HEK293 (cell line): ENCODE measurements at regions of chr11 and their contacts with region 1.

Region 1: DNA sequence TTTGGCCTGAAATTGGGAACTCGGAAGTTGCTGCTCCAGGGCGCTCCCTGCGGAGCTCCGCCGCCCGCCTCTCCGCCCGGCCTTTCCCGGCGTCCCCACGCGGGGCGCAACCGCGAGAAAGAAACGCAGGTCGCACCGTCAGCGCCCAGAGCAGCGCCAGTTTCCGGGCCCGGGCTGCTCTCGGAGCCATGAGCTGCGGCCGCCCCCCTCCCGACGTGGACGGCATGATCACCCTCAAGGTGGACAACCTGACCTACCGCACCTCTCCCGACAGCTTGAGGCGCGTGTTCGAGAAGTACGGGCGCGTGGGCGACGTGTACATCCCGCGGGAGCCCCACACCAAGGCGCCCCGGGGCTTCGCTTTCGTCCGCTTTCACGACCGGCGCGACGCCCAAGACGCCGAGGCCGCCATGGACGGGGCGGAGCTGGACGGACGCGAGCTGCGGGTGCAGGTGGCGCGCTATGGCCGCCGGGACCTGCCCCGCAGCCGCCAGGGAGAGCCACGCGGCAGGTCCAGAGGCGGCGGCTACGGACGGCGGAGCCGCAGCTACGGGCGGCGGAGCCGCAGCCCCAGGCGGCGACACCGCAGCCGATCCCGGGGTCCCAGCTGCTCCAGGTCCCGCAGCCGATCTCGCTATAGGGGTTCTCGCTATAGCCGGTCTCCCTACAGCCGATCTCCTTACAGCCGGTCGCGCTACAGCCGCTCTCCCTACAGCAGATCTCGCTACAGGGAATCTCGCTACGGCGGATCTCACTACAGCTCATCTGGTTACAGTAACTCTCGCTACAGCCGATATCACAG is 521 bp downstream of the SRSF8 start:
- H3K4me3 ChIP-seq: peak overlapping the region; percentile 79
- H3K27ac ChIP-seq: peak overlapping the region; percentile 86
- H3K4me1 ChIP-seq: no peaks in the 10 kb centered on the region
- CTCF ChIP-seq: peak; percentile 92

Region 2: GRCh38 chr11:94973099-94973968 is 93.9 kb before region 1 on chr11 and contains the starts of genes CWC15 and KDM4D:
- CTCF ChIA-PET with region 1: interaction called, 4 read pairs
- POLR2A ChIA-PET with region 1: interaction called, 31 read pairs
- H3K4me3 ChIP-seq: peak within 1 kb of the TSS; percentile 76
- H3K27ac ChIP-seq: peak within 1 kb of the TSS; percentile 57
- H3K4me1 ChIP-seq: no peaks in the 10 kb centered on the region; the same call in 1 of the 2 replicates
- CTCF ChIP-seq: no peak

Region 3: DNA sequence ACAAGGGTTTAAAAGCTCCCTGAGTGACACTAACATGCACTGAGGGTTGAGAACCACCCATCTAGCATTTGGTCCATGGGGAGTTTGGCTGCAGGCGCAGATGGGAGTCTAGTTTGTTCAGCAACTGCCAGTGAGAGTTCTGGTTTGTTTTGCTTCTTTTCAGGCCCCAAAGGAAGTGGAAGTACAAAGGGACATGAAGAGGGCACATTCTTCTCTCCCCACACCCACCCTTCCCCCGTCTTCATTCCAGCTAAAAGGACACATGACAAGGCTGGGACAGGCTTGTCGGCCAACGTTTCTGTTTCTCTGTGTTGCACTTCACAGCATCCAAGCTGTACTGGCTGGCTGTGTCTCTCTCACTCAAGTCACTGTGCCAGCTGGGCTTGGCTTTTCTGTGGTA is 14.2 kb after region 1 on chr11:
- CTCF ChIA-PET with region 1: interaction called, 24 read pairs
- POLR2A ChIA-PET with region 1: interaction called, 6 read pairs
- H3K4me3 ChIP-seq: no peak overlapping the region
- H3K27ac ChIP-seq: no peak overlapping the region
- H3K4me1 ChIP-seq: no peaks in the 10 kb centered on the region; the same call in 1 of the 2 replicates
- CTCF ChIP-seq: no peak

Region 4: GRCh38 chr11:95108159-95108611 is 40.9 kb after region 1 on chr11:
- CTCF ChIA-PET with region 1: interaction called, 4 read pairs
- POLR2A ChIA-PET with region 1: interaction called, 16 read pairs
- H3K4me3 ChIP-seq: no peak overlapping the region
- H3K27ac ChIP-seq: peak overlapping the region; percentile 59; the same call in 1 of the 2 replicates
- H3K4me1 ChIP-seq: peaks cover 20% of the 10 kb centered on the region
- CTCF ChIP-seq: no peak

Region 5: DNA sequence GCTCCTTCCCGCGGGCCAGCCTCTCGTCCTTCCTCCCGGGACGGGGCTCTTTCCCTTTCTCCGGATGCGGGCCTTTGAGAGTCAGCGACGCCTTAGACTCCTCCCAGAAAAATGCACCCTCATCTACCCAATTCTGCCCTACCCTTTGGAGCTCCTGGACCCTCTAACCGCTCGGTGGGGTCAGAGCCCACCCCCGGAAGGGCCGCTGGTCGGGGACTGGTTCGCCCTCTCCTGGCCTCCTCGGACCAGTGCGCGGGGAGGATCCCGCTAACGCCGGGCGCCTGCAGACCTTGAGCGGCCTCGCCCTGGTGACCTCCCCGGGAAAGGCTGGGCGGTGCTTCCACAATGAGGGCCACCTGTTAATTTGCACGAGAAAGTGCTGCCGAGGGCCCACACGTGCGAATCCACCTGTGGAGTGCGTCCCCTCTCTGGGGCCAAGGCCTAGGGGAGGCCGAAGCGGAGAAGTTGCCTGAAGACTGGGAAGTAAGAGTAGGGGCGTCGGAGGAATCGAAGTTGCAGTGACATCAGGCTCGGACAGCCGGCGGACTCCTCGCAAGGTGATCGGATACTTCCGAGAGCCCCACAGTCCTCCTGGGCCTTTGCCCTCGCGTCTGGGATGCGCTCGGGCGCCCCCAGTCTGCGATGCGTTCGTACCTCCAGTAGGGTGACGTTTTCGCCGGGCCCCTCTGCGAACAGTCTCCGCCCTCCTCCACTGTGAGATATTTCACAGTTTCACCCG is 83.9 kb after region 1 on chr11:
- CTCF ChIA-PET with region 1: interaction called, 36 read pairs
- POLR2A ChIA-PET with region 1: interaction called, 8 read pairs
- H3K4me3 ChIP-seq: peak overlapping the region; percentile 24
- H3K27ac ChIP-seq: no peak overlapping the region; the same call in 1 of the 2 replicates
- H3K4me1 ChIP-seq: no peaks in the 10 kb centered on the region; the same call in none of the 2 replicates
- CTCF ChIP-seq: peak; percentile 62; the same call in 1 of the 2 replicates